Activated CD4-positive, alpha-beta memory T cell treated with anti-CD3 and anti-CD28 coated beads, Interleukin-2, amount 10 ng/mL, durations not matched to agents 7 days and 5 days (primary cell): ENCODE measurements at regions of chr4 and their contacts with region 1.

Region 1: GRCh38 chr4:40228497-40229365 is 31.9 kb downstream of the RHOH start:
- DNase-seq: no peak
- H3K4me3 Mint-ChIP-seq: peak overlapping the region; percentile 57
- H3K27ac Mint-ChIP-seq: peak overlapping the region; percentile 75
- H3K4me1 Mint-ChIP-seq: peaks cover 95% of the 10 kb centered on the region
- H3K27me3 Mint-ChIP-seq: no peaks in the 10 kb centered on the region

Region 2: DNA sequence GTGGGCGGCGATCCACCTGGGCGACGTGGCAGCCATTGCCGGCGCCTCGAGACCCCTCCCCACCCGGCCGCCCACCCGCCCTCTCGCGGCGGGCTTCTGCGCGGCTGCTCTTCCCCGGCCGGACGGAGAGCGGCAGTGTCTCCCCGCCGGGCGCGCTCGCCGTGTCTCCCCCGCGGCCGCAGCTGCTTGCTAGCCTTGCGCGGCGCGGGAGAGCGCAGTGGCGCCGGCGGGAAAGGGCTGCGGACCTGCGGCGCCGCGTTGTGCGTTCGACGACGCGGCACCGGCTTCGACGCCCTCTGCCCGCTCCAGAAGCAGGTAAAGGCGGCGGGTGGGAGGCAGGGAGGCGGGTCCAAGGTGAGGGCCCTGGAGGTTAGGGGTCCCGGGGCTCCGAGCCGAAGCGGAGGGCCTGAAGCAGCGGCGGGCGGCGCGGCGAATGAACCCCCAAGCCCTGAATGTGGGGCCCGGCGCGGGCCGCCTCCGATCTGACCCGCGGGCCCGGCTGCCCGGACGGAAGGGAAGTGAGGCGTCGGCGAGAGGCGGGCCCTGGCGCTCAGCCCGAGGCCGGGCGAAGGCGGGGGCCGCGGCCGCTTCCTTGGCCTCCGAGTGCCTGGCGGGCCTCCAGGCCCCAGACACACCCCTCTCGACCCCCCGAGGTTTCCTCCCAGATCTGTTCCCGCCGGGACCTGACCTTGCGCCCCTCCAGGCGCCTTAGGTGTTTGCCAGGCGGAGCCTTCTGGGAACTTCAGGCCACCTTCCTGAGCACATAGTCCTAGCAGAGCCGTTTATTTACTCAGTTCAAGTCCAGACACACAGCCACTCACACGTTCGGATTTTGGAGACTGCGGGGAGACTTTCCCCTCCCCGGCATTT is 171.8 kb before region 1 on chr4 and contains the start of gene N4BP2:
- CTCF ChIA-PET with region 1: interaction called, 3 read pairs
- POLR2A ChIA-PET with region 1: interaction called, 21 read pairs
- DNase-seq: peak; percentile 75
- H3K4me3 Mint-ChIP-seq: peak within 1 kb of the TSS; percentile 97
- H3K27ac Mint-ChIP-seq: peak within 1 kb of the TSS; percentile 99
- H3K4me1 Mint-ChIP-seq: peaks cover 37% of the 10 kb centered on the region
- H3K27me3 Mint-ChIP-seq: no peaks in the 10 kb centered on the region
- total RNA-seq, gene N4BP2: 22.5 to 26.8 TPM

Region 3: DNA sequence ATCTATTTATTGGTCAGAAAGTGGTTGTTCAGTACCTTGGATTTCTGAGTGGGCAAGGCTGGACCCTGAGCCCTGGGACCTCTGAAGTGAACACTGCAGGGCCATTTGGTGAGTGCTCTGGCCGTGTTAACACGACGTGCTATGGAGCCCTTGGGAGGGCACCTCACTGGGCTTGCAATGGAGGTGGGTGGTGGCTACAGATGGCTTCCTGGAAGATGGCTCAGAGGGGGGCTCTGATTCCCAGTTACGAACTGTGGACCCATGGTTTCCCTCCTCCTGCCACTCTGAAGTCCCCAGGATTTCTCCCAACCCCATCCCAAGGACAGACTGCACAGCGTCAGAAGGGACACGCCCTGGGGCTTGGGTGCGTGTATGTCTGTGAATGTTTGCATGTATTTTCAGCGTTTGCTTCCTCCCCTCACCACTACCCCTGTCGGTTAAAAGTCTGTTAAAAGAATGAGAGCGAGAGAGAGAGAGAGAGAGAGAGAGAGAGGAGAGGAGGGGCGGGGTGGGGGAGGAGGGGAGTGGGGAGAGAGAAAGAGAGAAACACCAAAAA is 35.6 kb before region 1 on chr4:
- CTCF ChIA-PET with region 1: interaction called, 5 read pairs
- POLR2A ChIA-PET with region 1: interaction called, 326 read pairs
- DNase-seq: no peak
- H3K4me3 Mint-ChIP-seq: peak overlapping the region; percentile 97
- H3K27ac Mint-ChIP-seq: peak overlapping the region; percentile 99
- H3K4me1 Mint-ChIP-seq: peaks cover 67% of the 10 kb centered on the region
- H3K27me3 Mint-ChIP-seq: no peaks in the 10 kb centered on the region

Region 4: DNA sequence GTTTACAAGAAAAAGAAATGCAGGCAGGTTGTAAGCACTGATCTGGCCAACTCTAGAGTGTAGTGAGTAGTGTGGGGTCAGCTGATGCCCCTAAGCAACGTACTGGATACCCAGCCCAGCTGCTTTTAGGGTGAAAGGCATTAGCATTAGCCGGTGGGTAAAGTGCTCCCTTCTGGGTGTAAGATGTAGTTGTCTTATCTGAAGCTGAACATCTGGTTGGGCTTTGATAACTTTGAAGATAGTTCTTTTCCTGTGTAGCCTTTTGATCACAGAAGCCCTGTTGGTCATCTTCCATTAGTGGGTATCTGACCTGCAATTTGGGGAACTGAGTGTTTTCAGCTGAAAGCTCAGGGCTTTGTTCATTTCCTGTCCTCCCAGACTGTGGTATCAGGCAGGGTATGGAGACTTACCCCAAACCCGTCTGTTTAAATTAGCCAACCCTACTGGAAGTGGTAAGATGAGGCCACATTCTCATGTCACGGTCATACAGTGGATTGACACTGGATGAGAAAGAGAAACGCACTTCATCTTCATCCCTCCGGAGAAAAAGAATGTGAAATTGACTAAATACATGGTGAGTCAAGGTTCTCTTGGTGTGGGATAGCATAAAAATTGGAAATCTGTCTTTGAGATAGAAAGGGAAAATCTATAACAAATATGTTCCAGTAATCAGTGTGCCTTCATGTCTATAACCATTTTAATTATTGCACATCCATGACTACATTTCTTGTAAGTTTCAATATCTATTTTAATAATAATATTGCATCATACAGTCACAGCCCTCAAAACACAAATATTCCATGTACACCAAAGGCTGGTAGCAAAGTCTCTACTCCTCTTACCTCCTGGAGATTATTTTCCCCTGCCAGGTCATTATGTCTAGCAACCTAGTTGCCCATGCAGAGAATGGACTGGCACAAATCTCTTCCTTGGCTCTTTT is 23.2 kb before region 1 on chr4:
- CTCF ChIA-PET with region 1: interaction called, 44 read pairs
- POLR2A ChIA-PET with region 1: interaction called, 403 read pairs
- DNase-seq: peak; percentile 66
- H3K4me3 Mint-ChIP-seq: peak overlapping the region; percentile 97
- H3K27ac Mint-ChIP-seq: peak overlapping the region; percentile 99
- H3K4me1 Mint-ChIP-seq: peaks cover 64% of the 10 kb centered on the region
- H3K27me3 Mint-ChIP-seq: no peaks in the 10 kb centered on the region

Region 5: GRCh38 chr4:40238700-40239548 is 10.2 kb after region 1 on chr4:
- CTCF ChIA-PET with region 1: interaction called, 17 read pairs
- POLR2A ChIA-PET with region 1: interaction called, 87 read pairs
- DNase-seq: peak; percentile 87
- H3K4me3 Mint-ChIP-seq: peak overlapping the region; percentile 67
- H3K27ac Mint-ChIP-seq: peak overlapping the region; percentile 93
- H3K4me1 Mint-ChIP-seq: peaks cover 89% of the 10 kb centered on the region
- H3K27me3 Mint-ChIP-seq: no peaks in the 10 kb centered on the region

Region 6: GRCh38 chr4:40247350-40247749 is 18.6 kb after region 1 on chr4:
- CTCF ChIA-PET with region 1: interaction called, 17 read pairs
- POLR2A ChIA-PET with region 1: interaction called, 25 read pairs
- DNase-seq: peak; percentile 80
- H3K4me3 Mint-ChIP-seq: peak overlapping the region; percentile 2
- H3K27ac Mint-ChIP-seq: peak overlapping the region; percentile 89
- H3K4me1 Mint-ChIP-seq: peaks cover 84% of the 10 kb centered on the region
- H3K27me3 Mint-ChIP-seq: no peaks in the 10 kb centered on the region

Region 7: DNA sequence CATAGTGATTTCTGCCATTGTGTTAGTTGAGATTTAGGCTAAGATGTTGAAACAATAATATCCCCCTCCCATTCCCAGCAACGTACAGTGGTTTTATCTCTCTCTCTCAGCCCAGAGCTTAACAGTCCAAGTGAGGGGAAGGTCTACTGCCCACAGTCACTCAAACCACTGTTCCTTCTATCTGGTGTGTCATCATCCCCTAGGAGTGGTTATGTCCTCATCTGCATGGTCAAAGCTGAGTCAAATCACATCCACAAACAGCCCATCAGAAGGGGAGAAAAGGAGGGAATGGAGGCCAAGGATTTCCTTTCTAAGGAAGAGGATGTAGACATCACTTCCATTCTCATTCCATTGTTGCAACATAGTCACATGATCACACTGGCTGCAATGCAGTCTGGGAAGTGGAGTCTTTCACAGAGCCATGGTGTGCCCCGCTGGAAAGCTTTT is 63.6 kb after region 1 on chr4:
- CTCF ChIA-PET with region 1: no interaction called
- POLR2A ChIA-PET with region 1: no interaction called
- DNase-seq: no peak
- H3K4me3 Mint-ChIP-seq: no peak overlapping the region
- H3K27ac Mint-ChIP-seq: peak overlapping the region; percentile 56
- H3K4me1 Mint-ChIP-seq: peaks cover 42% of the 10 kb centered on the region
- H3K27me3 Mint-ChIP-seq: no peaks in the 10 kb centered on the region

Region 8: DNA sequence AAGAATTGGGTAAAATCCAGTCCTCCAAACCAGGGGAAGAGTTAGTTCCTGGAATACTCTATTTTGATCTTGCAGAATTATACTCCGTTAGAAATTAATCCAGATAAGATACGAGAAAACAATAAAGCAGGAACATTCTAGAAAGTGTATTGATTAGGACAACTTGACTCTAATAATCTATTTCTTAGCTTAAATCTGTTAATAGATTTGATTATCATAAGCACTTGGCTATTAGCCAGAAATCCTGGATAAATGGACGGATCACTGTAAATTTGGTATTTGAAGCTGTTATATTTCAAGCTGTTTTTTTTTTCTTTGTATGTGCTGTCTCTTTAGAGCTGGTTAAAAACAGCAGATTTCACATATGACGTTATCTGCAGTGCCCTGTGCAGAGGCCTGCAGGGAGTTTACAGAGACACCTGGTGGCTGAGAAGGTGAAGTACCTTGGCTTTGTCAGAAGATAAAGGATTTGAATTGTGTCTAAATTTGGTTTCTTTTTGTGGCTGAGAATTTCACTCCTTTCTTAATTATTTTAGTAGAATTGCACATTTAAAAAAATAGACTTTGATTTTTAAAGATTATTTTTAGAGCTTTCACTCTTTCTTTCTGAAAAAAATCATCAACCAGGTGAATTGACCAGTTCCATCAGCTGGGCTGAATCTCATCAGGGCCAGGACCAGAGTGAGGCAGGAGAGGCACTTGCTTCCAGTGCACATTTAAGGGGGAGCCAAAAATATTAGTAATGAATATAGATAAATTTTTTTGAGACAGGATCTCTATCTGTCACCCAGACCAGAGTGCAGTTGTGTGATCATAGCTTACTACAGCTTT is 96.7 kb after region 1 on chr4:
- CTCF ChIA-PET with region 1: interaction called, 10 read pairs
- POLR2A ChIA-PET with region 1: interaction called, 3 read pairs
- DNase-seq: peak; percentile 69
- H3K4me3 Mint-ChIP-seq: no peak overlapping the region
- H3K27ac Mint-ChIP-seq: no peak overlapping the region
- H3K4me1 Mint-ChIP-seq: peaks cover 18% of the 10 kb centered on the region
- H3K27me3 Mint-ChIP-seq: peaks cover 2% of the 10 kb centered on the region